CD4-positive, alpha-beta memory T cell (primary cell): ENCODE measurements at regions of chr19 and their contacts with region 1.

Region 1: DNA sequence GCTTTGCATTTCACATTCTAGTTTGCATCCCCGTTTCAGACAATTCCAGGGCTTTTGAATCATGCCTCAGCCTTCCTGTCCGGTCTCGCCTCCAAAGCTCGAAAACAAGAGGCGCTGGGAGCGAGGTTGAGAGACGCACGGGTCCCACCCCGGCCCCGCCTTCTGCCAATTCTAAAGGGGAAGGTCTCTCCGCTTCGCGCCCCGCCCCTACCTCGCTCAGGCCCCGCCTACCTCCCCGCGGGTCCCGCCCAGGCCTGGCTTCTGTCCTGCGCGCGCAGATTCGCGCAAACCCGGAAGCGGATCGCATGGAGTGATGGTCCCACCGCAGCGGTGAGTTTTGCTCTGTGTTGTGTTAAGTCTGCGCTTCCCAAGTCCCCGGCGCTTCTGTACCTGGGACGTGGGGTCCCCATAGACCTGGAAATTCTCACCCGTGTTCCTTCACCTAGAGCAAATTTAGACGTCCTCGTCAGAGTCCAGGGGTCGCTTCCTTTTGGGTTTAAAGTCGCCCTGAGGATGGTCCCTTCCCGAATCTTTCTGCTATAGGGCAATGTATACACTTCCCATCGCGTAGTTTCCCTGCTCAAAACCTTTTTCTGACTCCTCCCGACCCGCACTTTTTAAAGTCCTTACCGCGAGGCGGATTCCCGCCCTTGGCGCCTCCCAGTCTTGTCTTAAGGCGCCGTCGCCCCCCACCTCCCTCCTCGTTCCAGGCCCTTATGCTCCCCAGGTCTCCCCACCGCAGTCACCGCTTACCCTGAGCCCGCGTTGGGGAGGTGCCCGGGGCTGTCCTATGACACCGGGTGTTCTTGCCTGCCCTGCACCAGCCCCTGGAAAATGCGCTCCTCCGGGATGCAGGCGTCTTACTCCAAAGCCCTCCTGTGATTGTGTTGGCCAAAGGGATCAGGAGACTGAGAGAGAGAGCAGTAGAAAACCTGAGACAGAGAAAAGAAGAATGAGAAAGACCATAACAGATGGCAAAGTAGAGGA is at the start of gene ZNF845:
- DNase-seq: peak; percentile 93 to 99 (median 95)
- H3K4me3 ChIP-seq: peak within 1 kb of the TSS; percentile 90 to 99
- H3K4me3 Mint-ChIP-seq: peak within 1 kb of the TSS; percentile 89 to 98 (median 95)
- H3K27ac ChIP-seq: peak within 1 kb of the TSS; percentile 64
- H3K27ac Mint-ChIP-seq: peak within 1 kb of the TSS; percentile 89 to 97 (median 94)
- H3K4me1 ChIP-seq: peaks cover 14% of the 10 kb centered on the region
- H3K4me1 Mint-ChIP-seq: peaks cover 13 to 35% (median 21%) of the 10 kb centered on the region in 4 donors
- H3K27me3 ChIP-seq: no peaks in the 10 kb centered on the region
- H3K27me3 Mint-ChIP-seq: peaks cover 4% of the 10 kb centered on the region in 2 donors
- total RNA-seq, gene ZNF845: 18.0 to 19.4 TPM

Region 2: GRCh38 chr19:51904331-51905165 is 1429.2 kb before region 1 on chr19 and contains the start of gene ZNF649:
- CTCF ChIA-PET with region 1: no interaction called
- POLR2A ChIA-PET with region 1: no interaction called
- intact Hi-C with region 1: loop called (anchors 10 kb)
- DNase-seq: peak; percentile 72 to 85 (median 79)
- H3K4me3 ChIP-seq: peak within 1 kb of the TSS; percentile 83 to 92
- H3K4me3 Mint-ChIP-seq: peak within 1 kb of the TSS; percentile 97 to 100 (median 99)
- H3K27ac ChIP-seq: peak within 1 kb of the TSS; percentile 77
- H3K27ac Mint-ChIP-seq: peak within 1 kb of the TSS; percentile 84 to 99 (median 96)
- H3K4me1 ChIP-seq: peaks cover 9% of the 10 kb centered on the region
- H3K4me1 Mint-ChIP-seq: peaks cover 13 to 35% (median 21%) of the 10 kb centered on the region in 4 donors
- H3K27me3 ChIP-seq: no peaks in the 10 kb centered on the region
- H3K27me3 Mint-ChIP-seq: peaks cover 9 to 16% of the 10 kb centered on the region in 2 donors
- total RNA-seq, gene ZNF649: 28.6 to 30.8 TPM

Region 3: GRCh38 chr19:53254411-53255341 is 79.1 kb before region 1 on chr19 and contains the start of gene ZNF677:
- CTCF ChIA-PET with region 1: no interaction called
- POLR2A ChIA-PET with region 1: no interaction called
- intact Hi-C with region 1: loop called (anchors 1 kb)
- DNase-seq: peak; percentile 76 to 85 (median 77)
- H3K4me3 ChIP-seq: peak within 1 kb of the TSS; percentile 30 to 54
- H3K4me3 Mint-ChIP-seq: peak within 1 kb of the TSS; percentile 83 to 93 (median 87)
- H3K27ac ChIP-seq: peak within 1 kb of the TSS; percentile 18
- H3K27ac Mint-ChIP-seq: peak within 1 kb of the TSS in 6 of 7 donors; percentile 43 to 83 (median 71)
- H3K4me1 ChIP-seq: no peaks in the 10 kb centered on the region
- H3K4me1 Mint-ChIP-seq: peaks cover 4 to 15% (median 12%) of the 10 kb centered on the region in 4 donors
- H3K27me3 ChIP-seq: no peaks in the 10 kb centered on the region
- H3K27me3 Mint-ChIP-seq: peaks cover 3 to 10% of the 10 kb centered on the region in 2 donors
- total RNA-seq, gene ZNF677: 19.8 to 24.2 TPM

Region 4: DNA sequence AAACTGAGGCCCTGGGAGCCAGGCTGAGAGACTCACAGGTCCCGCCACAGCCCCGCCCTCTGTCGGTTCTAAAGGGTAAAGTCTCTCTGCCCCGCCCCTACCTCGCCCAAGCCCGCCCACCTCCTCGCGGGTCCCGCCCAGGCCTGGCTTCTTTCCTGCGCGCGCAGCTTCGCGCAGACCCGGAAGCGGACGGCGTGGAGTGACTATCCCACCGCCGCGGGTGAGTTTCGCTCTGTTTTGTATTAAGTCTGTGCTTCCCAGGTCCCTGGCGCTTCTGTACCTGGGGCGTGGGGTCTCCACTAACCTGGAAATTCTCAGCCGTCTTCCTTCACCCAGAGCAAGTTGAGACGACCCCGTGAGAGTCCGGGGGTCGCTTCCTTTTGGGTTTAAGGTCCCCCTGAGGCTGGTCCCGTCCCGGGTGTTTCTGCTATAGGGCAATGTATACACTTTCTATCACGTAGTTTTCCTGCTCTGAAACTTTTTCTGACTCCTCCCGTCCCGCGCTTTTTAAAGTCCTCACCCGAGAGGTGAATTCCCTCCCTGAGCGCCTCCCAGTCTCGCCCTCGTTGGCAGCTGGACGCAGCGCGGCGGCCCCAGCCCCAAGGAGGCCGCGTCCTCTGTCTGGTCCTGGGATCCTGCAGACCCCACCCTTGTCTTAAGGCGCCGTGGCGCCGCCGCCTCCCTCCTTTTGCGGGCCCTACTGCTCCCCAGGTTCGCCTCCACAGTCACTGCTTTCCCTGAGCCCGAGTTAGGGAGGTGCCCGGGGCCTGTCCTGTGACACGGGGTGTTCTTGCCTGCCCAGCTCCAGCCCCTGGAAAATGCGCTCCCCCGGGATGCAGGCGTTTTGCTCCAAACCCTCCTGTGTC is 61.5 kb after region 1 on chr19 and contains the start of gene ZNF765:
- CTCF ChIA-PET with region 1: no interaction called
- POLR2A ChIA-PET with region 1: interaction called, 9 read pairs
- intact Hi-C with region 1: loop called (anchors 2 kb)
- DNase-seq: peak; percentile 93 to 98 (median 95)
- H3K4me3 ChIP-seq: peak within 1 kb of the TSS; percentile 69 to 70
- H3K4me3 Mint-ChIP-seq: peak within 1 kb of the TSS; percentile 92 to 99 (median 98)
- H3K27ac ChIP-seq: peak within 1 kb of the TSS; percentile 75
- H3K27ac Mint-ChIP-seq: peak within 1 kb of the TSS; percentile 91 to 98 (median 96)
- H3K4me1 ChIP-seq: peaks cover 20% of the 10 kb centered on the region
- H3K4me1 Mint-ChIP-seq: peaks cover 18 to 41% (median 29%) of the 10 kb centered on the region in 4 donors
- H3K27me3 ChIP-seq: no peaks in the 10 kb centered on the region
- H3K27me3 Mint-ChIP-seq: no peaks in the 10 kb centered on the region
- total RNA-seq, gene ZNF765: 20.9 to 21.6 TPM

Region 5: GRCh38 chr19:53467485-53468262 is 133.9 kb after region 1 on chr19 and contains the start of gene ZNF813:
- CTCF ChIA-PET with region 1: no interaction called
- POLR2A ChIA-PET with region 1: no interaction called
- intact Hi-C with region 1: loop called (anchors 5 kb)
- DNase-seq: peak; percentile 88 to 96 (median 91)
- H3K4me3 ChIP-seq: peak within 1 kb of the TSS; percentile 57 to 62
- H3K4me3 Mint-ChIP-seq: peak within 1 kb of the TSS; percentile 89 to 96 (median 93)
- H3K27ac ChIP-seq: peak within 1 kb of the TSS; percentile 51
- H3K27ac Mint-ChIP-seq: peak within 1 kb of the TSS; percentile 83 to 94 (median 91)
- H3K4me1 ChIP-seq: peaks cover 13% of the 10 kb centered on the region
- H3K4me1 Mint-ChIP-seq: peaks cover 14 to 45% (median 25%) of the 10 kb centered on the region in 4 donors
- H3K27me3 ChIP-seq: no peaks in the 10 kb centered on the region
- H3K27me3 Mint-ChIP-seq: peaks cover 8 to 9% of the 10 kb centered on the region in 2 donors
- total RNA-seq, gene ZNF813: 9.4 to 10.1 TPM